ENCODE measurements at regions of chr2 and their contacts with region 1.

Region 1: DNA sequence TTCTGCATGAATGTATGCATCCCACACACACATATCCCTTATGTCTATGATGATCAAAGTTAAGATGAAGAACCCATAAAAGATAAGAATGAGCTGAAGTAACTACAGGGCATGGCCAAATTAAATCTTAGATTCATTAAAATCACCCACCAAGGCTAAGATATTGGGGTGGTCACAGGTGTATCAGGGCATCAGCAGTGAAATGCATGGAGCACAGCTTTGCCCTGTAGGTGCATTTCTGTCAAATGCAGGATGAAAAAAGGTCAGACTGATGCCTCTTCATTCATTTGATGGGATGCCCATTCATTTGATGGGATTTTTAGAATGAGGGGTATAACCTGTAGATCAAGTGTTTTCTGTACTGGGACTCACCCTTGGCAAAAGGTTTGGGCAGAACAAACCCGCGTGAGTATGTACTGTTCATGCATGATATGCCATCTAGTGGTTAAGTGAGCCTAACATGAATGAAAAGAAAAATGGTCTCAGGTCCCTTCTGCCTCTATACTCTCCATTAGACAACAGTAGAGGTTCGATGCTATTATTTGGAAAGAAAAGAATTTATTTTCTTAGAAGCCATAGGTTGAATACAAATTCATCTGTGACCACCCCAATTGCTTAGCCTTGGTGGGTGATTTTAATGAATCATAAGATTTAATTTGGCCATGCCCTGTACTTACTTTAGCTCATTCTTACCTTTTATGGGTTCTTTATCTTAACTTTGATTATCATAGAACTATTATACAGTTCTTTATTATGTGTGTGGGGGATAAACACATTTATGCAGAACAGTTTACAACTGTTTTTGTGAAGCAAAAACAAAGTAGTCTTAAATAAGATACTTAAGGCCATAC is 43.2 kb upstream of the NOSTRIN start:
- DNase-seq: no peak
- ATAC-seq: peak; percentile 56
- H3K4me3 Mint-ChIP-seq: no peak overlapping the region
- H3K27ac Mint-ChIP-seq: no peak overlapping the region
- H3K4me1 Mint-ChIP-seq: peaks cover 3% of the 10 kb centered on the region
- H3K27me3 Mint-ChIP-seq: no peaks in the 10 kb centered on the region
- CTCF ChIP-seq: no peak

Region 2: GRCh38 chr2:168136392-168136977 is 622.7 kb before region 1 on chr2:
- CTCF ChIA-PET with region 1: no interaction called
- POLR2A ChIA-PET with region 1: no interaction called
- intact Hi-C with region 1: loop called (anchors 1 kb)
- DNase-seq: no peak
- ATAC-seq: peak; percentile 57
- H3K4me3 Mint-ChIP-seq: no peak overlapping the region
- H3K27ac Mint-ChIP-seq: no peak overlapping the region
- H3K4me1 Mint-ChIP-seq: peaks cover 24% of the 10 kb centered on the region
- H3K27me3 Mint-ChIP-seq: no peaks in the 10 kb centered on the region
- CTCF ChIP-seq: peak; percentile 26

Region 3: GRCh38 chr2:168346725-168347477 is 412.3 kb before region 1 on chr2:
- CTCF ChIA-PET with region 1: interaction called, 43 read pairs
- POLR2A ChIA-PET with region 1: interaction called, 6 read pairs
- intact Hi-C with region 1: loop called (anchors 1 kb)
- DNase-seq: peak; percentile 24
- ATAC-seq: peak; percentile 72
- H3K4me3 Mint-ChIP-seq: peak overlapping the region; percentile 78
- H3K27ac Mint-ChIP-seq: no peak overlapping the region
- H3K4me1 Mint-ChIP-seq: peaks cover 22% of the 10 kb centered on the region
- H3K27me3 Mint-ChIP-seq: peaks cover 5% of the 10 kb centered on the region
- CTCF ChIP-seq: peak; percentile 61

Region 4: DNA sequence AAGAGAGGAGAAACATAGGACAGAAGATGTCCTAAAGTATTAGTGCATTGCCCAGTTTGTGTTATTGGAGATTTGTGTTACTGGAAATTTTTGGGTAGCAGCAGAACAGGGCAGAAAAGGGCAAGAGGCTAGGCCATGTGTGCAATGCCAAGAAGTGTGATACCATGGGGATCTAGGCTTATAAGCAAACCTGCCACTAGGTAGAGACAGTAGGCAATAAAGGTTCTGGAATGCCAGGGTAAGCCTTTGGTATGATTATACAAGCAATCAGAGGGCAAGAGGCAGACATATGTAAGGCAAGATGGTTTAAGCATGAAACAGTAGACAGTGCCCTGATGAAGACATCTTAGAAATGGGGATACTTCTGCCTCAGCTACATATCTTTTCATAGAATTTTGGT is 315.4 kb before region 1 on chr2:
- CTCF ChIA-PET with region 1: no interaction called
- POLR2A ChIA-PET with region 1: no interaction called
- intact Hi-C with region 1: loop called (anchors 5 kb)
- DNase-seq: no peak
- ATAC-seq: peak; percentile 34
- H3K4me3 Mint-ChIP-seq: no peak overlapping the region
- H3K27ac Mint-ChIP-seq: no peak overlapping the region
- H3K4me1 Mint-ChIP-seq: no peaks in the 10 kb centered on the region
- H3K27me3 Mint-ChIP-seq: no peaks in the 10 kb centered on the region
- CTCF ChIP-seq: no peak

Region 5: GRCh38 chr2:168920504-168921157 is 161.4 kb after region 1 on chr2:
- CTCF ChIA-PET with region 1: interaction called, 4 read pairs
- POLR2A ChIA-PET with region 1: no interaction called
- intact Hi-C with region 1: loop called (anchors 1 kb)
- DNase-seq: no peak
- ATAC-seq: no peak
- H3K4me3 Mint-ChIP-seq: no peak overlapping the region
- H3K27ac Mint-ChIP-seq: no peak overlapping the region
- H3K4me1 Mint-ChIP-seq: no peaks in the 10 kb centered on the region
- H3K27me3 Mint-ChIP-seq: peaks cover 10% of the 10 kb centered on the region
- CTCF ChIP-seq: peak; percentile 50